ENCODE measurements at regions of chr12 and their contacts with region 1.

Region 1: GRCh38 chr12:4526923-4527546 is 11.7 kb upstream of the RAD51AP1 start:
- DNase-seq: peak in 5 of 9 donors; percentile 6 to 42 (median 27)
- ATAC-seq: peak; percentile 57
- H3K4me3 ChIP-seq: no peak overlapping the region
- H3K4me3 Mint-ChIP-seq: no peak overlapping the region
- H3K27ac ChIP-seq: no peak overlapping the region
- H3K27ac Mint-ChIP-seq: peak overlapping the region in 2 of 9 donors; percentile 45 to 65
- H3K4me1 ChIP-seq: peaks cover 0 to 8% of the 10 kb centered on the region in 2 donors
- H3K4me1 Mint-ChIP-seq: peaks cover 0 to 8% (median 0%) of the 10 kb centered on the region in 7 donors
- H3K27me3 ChIP-seq: no peaks in the 10 kb centered on the region
- H3K27me3 Mint-ChIP-seq: no peaks in the 10 kb centered on the region

Region 2: DNA sequence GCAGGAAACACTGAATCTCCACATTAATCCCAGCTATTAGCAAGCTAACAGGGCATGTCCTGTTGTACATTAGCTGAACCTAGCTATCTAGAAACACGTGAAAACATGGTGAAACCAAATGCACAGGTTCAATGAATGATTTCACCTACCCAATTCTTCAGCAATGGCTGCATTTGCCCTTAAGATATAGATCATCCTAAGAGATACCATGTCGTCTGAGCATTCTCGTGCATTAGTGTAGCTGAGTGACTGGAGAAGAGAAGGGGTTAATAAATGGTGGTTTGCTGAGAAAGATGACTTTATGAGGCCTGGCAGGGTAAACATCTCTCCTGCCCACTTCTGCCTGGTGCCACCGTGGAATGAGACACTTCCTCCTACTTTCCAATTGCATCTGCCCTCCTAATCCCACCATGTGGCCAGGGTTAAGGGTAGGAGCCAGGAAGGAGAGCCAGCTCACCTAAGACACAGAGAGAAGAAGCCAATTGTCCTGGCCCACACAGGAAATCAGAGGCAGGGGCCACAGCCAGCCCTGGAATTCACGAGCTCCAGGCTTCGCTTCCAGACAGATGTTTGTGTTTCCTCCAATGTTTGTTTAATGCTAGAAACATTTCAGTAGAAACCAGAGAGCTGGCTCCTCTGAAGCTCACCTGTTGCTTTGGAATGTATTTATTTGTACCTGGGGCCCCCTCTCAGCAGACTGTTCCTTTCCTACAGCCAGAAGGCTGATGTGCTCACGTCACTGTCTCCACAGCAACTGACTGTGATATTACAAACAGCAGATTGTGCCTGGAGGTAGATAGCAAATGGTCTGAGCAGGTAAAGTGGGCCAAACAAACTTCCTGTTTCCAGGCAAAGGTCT is 527.8 kb before region 1 on chr12:
- CTCF ChIA-PET with region 1: interaction called, 3 read pairs
- POLR2A ChIA-PET with region 1: no interaction called
- intact Hi-C with region 1: loop called in 1 of 2 experiments (anchors 10 kb)
- DNase-seq: peak in 5 of 9 donors; percentile 15 to 37 (median 21)
- ATAC-seq: peak; percentile 58
- H3K4me3 ChIP-seq: no peak overlapping the region
- H3K4me3 Mint-ChIP-seq: no peak overlapping the region
- H3K27ac ChIP-seq: no peak overlapping the region
- H3K27ac Mint-ChIP-seq: peak overlapping the region in 3 of 9 donors; percentile 18 to 37 (median 36)
- H3K4me1 ChIP-seq: peaks cover 0 to 11% of the 10 kb centered on the region in 2 donors
- H3K4me1 Mint-ChIP-seq: peaks cover 2 to 49% (median 39%) of the 10 kb centered on the region in 7 donors
- H3K27me3 ChIP-seq: no peaks in the 10 kb centered on the region
- H3K27me3 Mint-ChIP-seq: peaks cover 0 to under 1% (median 0%) of the 10 kb centered on the region in 5 donors

Region 3: GRCh38 chr12:4307593-4308333 is 219.3 kb before region 1 on chr12:
- CTCF ChIA-PET with region 1: no interaction called
- POLR2A ChIA-PET with region 1: no interaction called
- intact Hi-C with region 1: loop called in 1 of 2 experiments (anchors 5 kb)
- DNase-seq: peak in 1 of 9 donors; percentile 7
- ATAC-seq: peak; percentile 47
- H3K4me3 ChIP-seq: no peak overlapping the region
- H3K4me3 Mint-ChIP-seq: no peak overlapping the region
- H3K27ac ChIP-seq: no peak overlapping the region
- H3K27ac Mint-ChIP-seq: peak overlapping the region in 3 of 9 donors; percentile 37 to 72 (median 65)
- H3K4me1 ChIP-seq: no peaks in the 10 kb centered on the region
- H3K4me1 Mint-ChIP-seq: peaks cover 0 to 15% (median 0%) of the 10 kb centered on the region in 7 donors
- H3K27me3 ChIP-seq: no peaks in the 10 kb centered on the region
- H3K27me3 Mint-ChIP-seq: no peaks in the 10 kb centered on the region

Region 4: DNA sequence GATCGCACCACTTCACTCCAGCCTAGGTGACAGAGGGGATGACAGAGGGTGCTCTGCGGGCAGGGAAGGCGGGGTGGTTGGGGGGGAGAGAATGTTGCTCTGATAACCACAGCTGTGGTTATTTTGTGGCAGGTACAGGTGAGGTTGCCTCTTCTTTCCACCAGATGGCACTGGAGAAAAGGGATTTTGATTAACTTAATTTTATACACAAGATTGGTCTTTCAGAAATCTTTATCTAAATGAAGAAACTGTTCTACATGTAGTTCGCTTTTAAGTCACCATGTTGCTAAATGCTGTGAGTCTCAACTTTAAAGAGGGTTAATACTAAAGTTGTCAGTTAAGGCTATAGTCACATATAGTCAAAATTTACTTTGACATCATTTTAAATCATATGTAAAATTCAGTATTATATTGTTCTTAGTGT is 173.2 kb before region 1 on chr12:
- CTCF ChIA-PET with region 1: interaction called, 3 read pairs
- POLR2A ChIA-PET with region 1: no interaction called
- intact Hi-C with region 1: loop called (anchors 1 kb)
- DNase-seq: peak in 7 of 9 donors; percentile 32 to 64 (median 53)
- ATAC-seq: peak; percentile 90
- H3K4me3 ChIP-seq: no peak overlapping the region
- H3K4me3 Mint-ChIP-seq: no peak overlapping the region
- H3K27ac ChIP-seq: no peak overlapping the region
- H3K27ac Mint-ChIP-seq: peak overlapping the region in 7 of 9 donors; percentile 14 to 71 (median 51)
- H3K4me1 ChIP-seq: no peaks in the 10 kb centered on the region
- H3K4me1 Mint-ChIP-seq: peaks cover 0 to 9% (median 4%) of the 10 kb centered on the region in 7 donors
- H3K27me3 ChIP-seq: no peaks in the 10 kb centered on the region
- H3K27me3 Mint-ChIP-seq: peaks cover 0 to 2% (median 0%) of the 10 kb centered on the region in 5 donors

Region 5: DNA sequence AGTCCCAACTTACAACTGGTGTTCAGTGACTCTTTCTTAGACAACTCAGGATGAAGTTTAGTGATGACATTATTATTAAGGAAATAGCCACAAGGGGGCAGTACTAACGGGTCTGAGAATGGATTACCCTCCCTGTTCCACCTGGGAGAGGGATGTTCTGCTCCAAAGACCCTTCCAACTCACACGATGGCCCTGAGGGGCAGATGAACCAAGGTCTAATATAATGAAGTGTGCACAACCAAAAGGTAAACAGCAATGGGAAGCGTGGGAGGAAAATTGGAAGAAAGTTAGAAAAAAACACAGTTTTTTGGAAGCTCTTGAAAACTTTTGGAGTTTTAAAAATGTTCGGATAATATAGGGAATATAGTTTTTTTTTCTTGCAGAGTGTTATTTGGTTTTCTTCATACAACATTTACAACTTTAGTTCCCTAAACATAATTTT is 105.4 kb before region 1 on chr12:
- CTCF ChIA-PET with region 1: interaction called, 58 read pairs
- POLR2A ChIA-PET with region 1: interaction called, 3 read pairs
- intact Hi-C with region 1: loop called (anchors 1 kb)
- DNase-seq: peak in 7 of 9 donors; percentile 17 to 61 (median 39)
- ATAC-seq: peak; percentile 62
- H3K4me3 ChIP-seq: no peak overlapping the region
- H3K4me3 Mint-ChIP-seq: no peak overlapping the region
- H3K27ac ChIP-seq: no peak overlapping the region
- H3K27ac Mint-ChIP-seq: peak overlapping the region in 3 of 9 donors; percentile 34 to 50 (median 49)
- H3K4me1 ChIP-seq: no peaks in the 10 kb centered on the region
- H3K4me1 Mint-ChIP-seq: peaks cover 0 to 3% (median 0%) of the 10 kb centered on the region in 7 donors
- H3K27me3 ChIP-seq: no peaks in the 10 kb centered on the region
- H3K27me3 Mint-ChIP-seq: peaks cover 3 to 14% (median 9%) of the 10 kb centered on the region in 5 donors

Region 6: DNA sequence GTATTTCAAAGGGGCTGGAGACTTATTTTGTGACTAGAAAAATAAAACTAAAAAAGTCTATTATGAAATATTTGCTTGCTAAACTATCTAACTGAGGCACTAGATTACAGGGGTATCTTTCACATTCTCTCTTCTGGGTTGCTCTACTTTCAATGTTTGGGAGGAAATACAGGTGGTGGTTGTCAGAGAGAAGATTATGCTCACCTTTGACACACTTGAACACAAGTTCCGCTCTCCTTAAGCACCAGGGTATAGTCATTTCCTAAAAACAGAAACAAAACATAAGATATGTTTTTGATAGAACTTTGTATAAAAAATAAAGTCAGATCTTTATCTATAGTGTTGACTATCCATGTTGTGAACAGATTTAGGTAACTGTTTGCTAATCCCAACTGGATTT is 36.1 kb before region 1 on chr12:
- CTCF ChIA-PET with region 1: no interaction called
- POLR2A ChIA-PET with region 1: no interaction called
- intact Hi-C with region 1: loop called in 1 of 2 experiments (anchors 5 kb)
- DNase-seq: peak in 3 of 9 donors; percentile 14 to 31 (median 30)
- ATAC-seq: no peak
- H3K4me3 ChIP-seq: no peak overlapping the region
- H3K4me3 Mint-ChIP-seq: no peak overlapping the region
- H3K27ac ChIP-seq: no peak overlapping the region
- H3K27ac Mint-ChIP-seq: peak overlapping the region in 6 of 9 donors; percentile 13 to 76 (median 26)
- H3K4me1 ChIP-seq: no peaks in the 10 kb centered on the region
- H3K4me1 Mint-ChIP-seq: peaks cover 0 to 15% (median 2%) of the 10 kb centered on the region in 7 donors
- H3K27me3 ChIP-seq: no peaks in the 10 kb centered on the region
- H3K27me3 Mint-ChIP-seq: no peaks in the 10 kb centered on the region

Region 7: DNA sequence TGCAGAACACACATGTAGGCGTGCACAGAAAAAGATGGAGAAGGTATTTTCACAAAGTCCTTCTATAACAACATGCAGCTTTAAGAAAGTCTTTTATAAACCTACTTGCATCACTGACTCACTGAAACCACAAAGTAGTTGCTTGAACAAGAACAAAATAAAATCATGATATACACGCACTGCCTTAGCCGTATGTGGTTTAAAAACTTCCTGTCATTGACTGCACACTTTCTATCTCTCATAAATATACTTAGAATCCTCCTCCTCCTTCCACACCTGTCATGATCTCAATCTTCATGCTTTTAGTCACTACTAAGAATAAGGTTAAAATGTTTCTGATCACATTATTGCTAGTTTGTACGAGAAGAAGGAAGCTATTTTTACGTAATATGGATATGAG is 20.2 kb before region 1 on chr12:
- CTCF ChIA-PET with region 1: interaction called, 6 read pairs
- POLR2A ChIA-PET with region 1: interaction called, 3 read pairs
- intact Hi-C with region 1: loop called in 1 of 2 experiments (anchors 1 kb)
- DNase-seq: peak in 7 of 9 donors; percentile 61 to 90 (median 84)
- ATAC-seq: peak; percentile 97
- H3K4me3 ChIP-seq: no peak overlapping the region
- H3K4me3 Mint-ChIP-seq: peak overlapping the region; percentile 12 to 75 (median 70)
- H3K27ac ChIP-seq: peak overlapping the region; percentile 62
- H3K27ac Mint-ChIP-seq: peak overlapping the region; percentile 78 to 95 (median 89)
- H3K4me1 ChIP-seq: peaks cover 13% of the 10 kb centered on the region in 2 donors
- H3K4me1 Mint-ChIP-seq: peaks cover 12 to 37% (median 28%) of the 10 kb centered on the region in 7 donors
- H3K27me3 ChIP-seq: no peaks in the 10 kb centered on the region
- H3K27me3 Mint-ChIP-seq: no peaks in the 10 kb centered on the region

Region 8: GRCh38 chr12:4591180-4591687 is 64.2 kb after region 1 on chr12:
- CTCF ChIA-PET with region 1: no interaction called
- POLR2A ChIA-PET with region 1: no interaction called
- intact Hi-C with region 1: no loop called
- DNase-seq: no peak
- ATAC-seq: no peak
- H3K4me3 ChIP-seq: no peak overlapping the region
- H3K4me3 Mint-ChIP-seq: no peak overlapping the region
- H3K27ac ChIP-seq: no peak overlapping the region
- H3K27ac Mint-ChIP-seq: peak overlapping the region in 1 of 9 donors; percentile 23
- H3K4me1 ChIP-seq: no peaks in the 10 kb centered on the region
- H3K4me1 Mint-ChIP-seq: peaks cover 0 to 1% (median 0%) of the 10 kb centered on the region in 7 donors
- H3K27me3 ChIP-seq: no peaks in the 10 kb centered on the region
- H3K27me3 Mint-ChIP-seq: peaks cover 8 to 18% (median 12%) of the 10 kb centered on the region in 5 donors

Region 9: DNA sequence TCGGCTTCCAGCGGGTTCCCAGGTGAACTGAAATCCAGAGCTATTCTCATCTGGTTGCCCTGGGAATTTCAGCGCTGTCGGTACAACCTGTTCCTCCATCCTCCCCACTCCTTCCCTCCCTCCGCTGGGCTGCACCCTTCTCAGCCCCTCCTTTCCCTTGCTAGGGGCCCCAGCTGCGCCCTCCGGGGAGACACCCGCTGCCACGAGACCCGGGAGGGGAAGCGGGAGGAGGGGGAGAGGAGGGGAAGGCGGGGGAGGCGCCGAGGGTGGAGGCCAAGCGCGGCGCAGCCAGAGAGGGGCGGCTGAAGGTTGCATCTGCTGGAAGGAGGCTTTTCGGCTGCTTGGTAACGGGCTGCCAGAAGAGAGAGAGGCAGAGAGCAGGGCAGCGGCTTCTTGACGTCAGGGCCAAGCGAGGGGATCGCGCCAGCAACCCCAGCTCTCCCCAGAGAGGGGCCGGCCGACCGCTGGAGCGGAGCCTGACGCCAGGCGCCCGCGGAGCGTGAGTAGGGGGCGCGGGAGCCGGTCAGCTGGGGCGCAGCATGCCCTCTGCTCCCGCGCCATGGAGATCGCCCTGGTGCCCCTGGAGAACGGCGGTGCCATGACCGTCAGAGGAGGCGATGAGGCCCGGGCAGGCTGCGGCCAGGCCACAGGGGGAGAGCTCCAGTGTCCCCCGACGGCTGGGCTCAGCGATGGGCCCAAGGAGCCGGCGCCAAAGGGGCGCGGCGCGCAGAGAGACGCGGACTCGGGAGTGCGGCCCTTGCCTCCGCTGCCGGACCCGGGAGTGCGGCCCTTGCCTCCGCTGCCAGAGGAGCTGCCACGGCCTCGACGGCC is 516.8 kb after region 1 on chr12 and contains the start of gene KCNA5:
- CTCF ChIA-PET with region 1: no interaction called
- POLR2A ChIA-PET with region 1: no interaction called
- intact Hi-C with region 1: no loop called
- DNase-seq: no peak
- ATAC-seq: no peak
- H3K4me3 ChIP-seq: no peak within 1 kb of the TSS
- H3K4me3 Mint-ChIP-seq: no peak within 1 kb of the TSS
- H3K27ac ChIP-seq: no peak within 1 kb of the TSS
- H3K27ac Mint-ChIP-seq: no peak within 1 kb of the TSS
- H3K4me1 ChIP-seq: no peaks in the 10 kb centered on the region
- H3K4me1 Mint-ChIP-seq: no peaks in the 10 kb centered on the region
- H3K27me3 ChIP-seq: peaks cover 0 to 6% of the 10 kb centered on the region in 2 donors
- H3K27me3 Mint-ChIP-seq: peaks cover 49 to 69% (median 59%) of the 10 kb centered on the region in 5 donors
- total RNA-seq, gene KCNA5: not detected